ENCODE measurements at regions of chr3 and their contacts with region 1.

Region 1: DNA sequence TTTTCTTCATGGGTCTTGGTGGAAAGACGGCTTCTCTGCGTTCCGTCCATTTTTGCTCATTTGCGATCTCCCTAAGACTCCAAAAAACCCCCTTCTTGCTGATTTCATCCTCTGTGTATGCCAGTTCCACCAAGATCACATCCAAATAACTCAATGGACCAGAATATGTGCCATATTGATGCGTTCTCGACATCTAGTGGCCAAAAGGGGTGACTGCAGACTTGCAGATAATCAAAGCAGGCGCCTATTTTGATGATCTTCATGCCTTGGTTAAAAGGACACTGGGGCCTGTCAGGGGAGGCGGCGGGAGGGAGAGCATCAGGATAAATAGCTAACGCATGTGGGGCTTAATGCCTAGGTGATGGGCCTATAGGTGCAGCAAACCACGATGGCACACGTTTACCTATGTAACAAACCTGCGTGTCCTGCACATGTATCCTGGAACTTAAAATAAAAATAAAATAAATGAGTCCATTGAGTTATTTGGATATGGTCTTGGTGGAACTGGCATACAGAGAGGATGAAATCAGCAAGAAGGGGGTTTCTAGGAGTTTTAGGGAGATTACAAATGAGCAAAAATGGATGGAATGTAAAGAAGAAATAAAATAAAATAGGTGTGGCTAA is 104.2 kb upstream of the RAD18 start:
- DNase-seq: peak; percentile 78
- ATAC-seq: peak; percentile 94
- H3K4me3 ChIP-seq: no peak overlapping the region
- H3K27ac ChIP-seq: no peak overlapping the region
- H3K4me1 ChIP-seq: no peaks in the 10 kb centered on the region
- H3K27me3 ChIP-seq: no peaks in the 10 kb centered on the region
- CTCF ChIP-seq: peak; percentile 97

Region 2: DNA sequence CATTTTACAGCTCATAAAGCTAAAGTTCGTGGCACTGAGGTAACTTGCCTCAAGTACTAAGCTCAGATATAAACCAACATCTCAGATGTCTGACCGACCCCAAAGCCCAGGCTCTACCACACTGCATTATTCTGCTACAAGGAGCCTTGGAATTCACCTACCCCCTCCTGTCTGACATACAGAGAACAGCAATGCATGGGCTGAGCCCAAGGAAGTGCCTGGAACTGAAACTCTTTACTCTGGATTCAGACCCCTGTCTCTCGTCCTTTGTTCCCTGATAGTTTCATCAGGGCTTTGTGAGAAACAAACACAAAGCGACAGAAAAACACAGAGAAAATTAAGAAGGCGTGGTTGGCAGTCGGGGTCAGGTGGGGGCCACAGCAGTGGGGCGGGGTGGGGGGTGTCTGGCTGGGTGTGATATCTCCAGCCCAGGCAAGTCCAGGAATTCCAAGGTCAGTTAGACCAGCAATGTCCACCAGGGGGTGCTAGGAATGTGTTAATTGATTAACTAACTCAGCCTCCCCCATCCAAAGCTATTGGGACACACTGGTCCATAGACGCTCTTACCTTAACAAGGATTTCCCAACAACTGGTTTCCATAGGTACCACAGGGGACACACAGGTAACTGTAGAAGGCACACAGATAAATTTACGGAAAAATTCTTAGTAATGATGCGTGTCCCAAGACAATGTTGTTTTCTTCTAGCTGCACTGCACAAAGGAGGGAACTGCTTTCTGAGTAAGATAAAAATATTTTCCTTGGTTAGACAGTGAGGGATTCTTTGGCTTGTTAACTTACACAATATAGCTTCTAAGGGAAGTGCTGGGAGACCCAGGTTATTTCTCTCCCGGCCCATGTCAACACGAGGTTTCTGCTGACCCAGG is 404.0 kb before region 1 on chr3:
- CTCF ChIA-PET with region 1: no interaction called
- POLR2A ChIA-PET with region 1: no interaction called
- intact Hi-C with region 1: loop called (anchors 2 kb)
- DNase-seq: peak; percentile 92
- ATAC-seq: peak; percentile 84
- H3K4me3 ChIP-seq: no peak overlapping the region
- H3K27ac ChIP-seq: no peak overlapping the region
- H3K4me1 ChIP-seq: peaks cover 6% of the 10 kb centered on the region
- H3K27me3 ChIP-seq: no peaks in the 10 kb centered on the region
- CTCF ChIP-seq: peak; percentile 75

Region 3: GRCh38 chr3:8938021-8938420 is 129.4 kb before region 1 on chr3:
- CTCF ChIA-PET with region 1: no interaction called
- POLR2A ChIA-PET with region 1: no interaction called
- intact Hi-C with region 1: loop called (anchors 1 kb)
- DNase-seq: peak; percentile 66
- ATAC-seq: peak; percentile 52
- H3K4me3 ChIP-seq: peak overlapping the region; percentile 29; the same call in 1 of the 2 replicates
- H3K27ac ChIP-seq: peak overlapping the region; percentile 81
- H3K4me1 ChIP-seq: peaks cover 29% of the 10 kb centered on the region
- H3K27me3 ChIP-seq: no peaks in the 10 kb centered on the region
- CTCF ChIP-seq: peak; percentile 75

Region 4: GRCh38 chr3:8970971-8971589 is 96.4 kb before region 1 on chr3:
- CTCF ChIA-PET with region 1: no interaction called
- POLR2A ChIA-PET with region 1: no interaction called
- intact Hi-C with region 1: loop called (anchors 1 kb)
- DNase-seq: peak; percentile 86
- ATAC-seq: peak; percentile 72
- H3K4me3 ChIP-seq: no peak overlapping the region
- H3K27ac ChIP-seq: no peak overlapping the region
- H3K4me1 ChIP-seq: peaks cover under 1% of the 10 kb centered on the region; the same call in 1 of the 2 replicates
- H3K27me3 ChIP-seq: no peaks in the 10 kb centered on the region
- CTCF ChIP-seq: peak; percentile 95

Region 5: GRCh38 chr3:8987645-8988383 is 79.7 kb before region 1 on chr3:
- CTCF ChIA-PET with region 1: no interaction called
- POLR2A ChIA-PET with region 1: no interaction called
- intact Hi-C with region 1: loop called (anchors 1 kb)
- DNase-seq: peak; percentile 75
- ATAC-seq: peak; percentile 89
- H3K4me3 ChIP-seq: no peak overlapping the region
- H3K27ac ChIP-seq: no peak overlapping the region
- H3K4me1 ChIP-seq: no peaks in the 10 kb centered on the region
- H3K27me3 ChIP-seq: no peaks in the 10 kb centered on the region
- CTCF ChIP-seq: peak; percentile 95

Region 6: GRCh38 chr3:9201266-9201665 is 133.8 kb after region 1 on chr3:
- CTCF ChIA-PET with region 1: no interaction called
- POLR2A ChIA-PET with region 1: no interaction called
- intact Hi-C with region 1: no loop called
- DNase-seq: no peak
- ATAC-seq: no peak
- H3K4me3 ChIP-seq: no peak overlapping the region
- H3K27ac ChIP-seq: no peak overlapping the region
- H3K4me1 ChIP-seq: no peaks in the 10 kb centered on the region
- H3K27me3 ChIP-seq: no peaks in the 10 kb centered on the region
- CTCF ChIP-seq: no peak

Measured in PC-3 (cell line).